Ovary (tissue), 10 donors: ENCODE measurements at regions of chr16 and their contacts with region 1.

Region 1: GRCh38 chr16:54929090-54930004 is 1.3 kb upstream of the IRX5 start:
- DNase-seq: peak; percentile 100
- H3K4me3 ChIP-seq: peak overlapping the region; percentile 59
- H3K27ac ChIP-seq: peak overlapping the region; percentile 68 to 80
- H3K4me1 ChIP-seq: peaks cover 3% of the 10 kb centered on the region
- H3K27me3 ChIP-seq: no peaks in the 10 kb centered on the region
- CTCF ChIP-seq: peak in 2 of 3 donors; percentile 7 to 33
- EP300 ChIP-seq: no peak
- POLR2A ChIP-seq: peak; percentile 19

Region 2: GRCh38 chr16:54286090-54286993 is 643.0 kb before region 1 on chr16 and contains the start of gene IRX3:
- intact Hi-C with region 1: loop called in 1 of 4 experiments (anchors 10 kb)
- DNase-seq: peak; percentile 29 to 75 (median 60)
- H3K4me3 ChIP-seq: peak within 1 kb of the TSS; percentile 47
- H3K27ac ChIP-seq: peak within 1 kb of the TSS in 1 of 2 donors; percentile 21
- H3K4me1 ChIP-seq: peaks cover 1% of the 10 kb centered on the region
- H3K27me3 ChIP-seq: peaks cover 3% of the 10 kb centered on the region
- CTCF ChIP-seq: no peak
- EP300 ChIP-seq: no peak
- POLR2A ChIP-seq: no peak
- total RNA-seq, gene IRX3: 0.47 to 18.6 (median 1.8) TPM

Region 3: GRCh38 chr16:54645345-54645744 is 284.0 kb before region 1 on chr16:
- intact Hi-C with region 1: no loop called
- DNase-seq: no peak
- H3K4me3 ChIP-seq: no peak overlapping the region
- H3K27ac ChIP-seq: no peak overlapping the region
- H3K4me1 ChIP-seq: no peaks in the 10 kb centered on the region
- H3K27me3 ChIP-seq: no peaks in the 10 kb centered on the region
- CTCF ChIP-seq: no peak
- EP300 ChIP-seq: no peak
- POLR2A ChIP-seq: no peak

Region 4: DNA sequence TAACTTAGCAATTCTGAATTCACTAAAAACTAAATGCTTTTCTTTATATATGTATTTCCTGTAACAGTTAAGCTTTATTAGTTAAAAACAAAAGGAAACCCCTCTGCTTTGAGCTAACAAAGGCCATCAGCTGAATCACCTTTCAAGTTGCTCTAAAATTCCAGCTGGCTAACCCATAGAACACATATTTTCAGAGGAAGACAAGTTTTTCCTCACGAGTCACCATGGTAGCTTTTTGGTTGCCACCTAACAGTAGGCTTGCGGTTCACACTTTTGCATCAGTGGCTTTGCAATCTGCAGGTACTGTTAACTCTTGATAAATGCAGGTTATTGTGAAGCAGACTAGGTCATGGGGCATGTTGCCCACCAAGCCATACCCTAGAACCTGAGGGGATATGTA is 56.3 kb before region 1 on chr16:
- intact Hi-C with region 1: no loop called
- DNase-seq: no peak
- H3K4me3 ChIP-seq: no peak overlapping the region
- H3K27ac ChIP-seq: no peak overlapping the region
- H3K4me1 ChIP-seq: no peaks in the 10 kb centered on the region
- H3K27me3 ChIP-seq: no peaks in the 10 kb centered on the region
- CTCF ChIP-seq: no peak
- EP300 ChIP-seq: no peak
- POLR2A ChIP-seq: no peak